Tibial artery (tissue), 4 donors: ENCODE measurements at regions of chr4 and their contacts with region 1.

Region 1: GRCh38 chr4:87390891-87391575 is at the start of gene HSD17B11:
- DNase-seq: peak; percentile 95
- H3K4me3 ChIP-seq: peak within 1 kb of the TSS; percentile 74 to 79
- H3K27ac ChIP-seq: peak within 1 kb of the TSS; percentile 92 to 95
- H3K4me1 ChIP-seq: peaks cover 0 to 20% (median 12%) of the 10 kb centered on the region in 4 donors
- H3K27me3 ChIP-seq: no peaks in the 10 kb centered on the region
- CTCF ChIP-seq: peak in 1 of 2 experiments; percentile 27

Region 2: GRCh38 chr4:87422104-87423052 is 31.3 kb after region 1 on chr4 and contains the start of gene NUDT9:
- intact Hi-C with region 1: loop called (anchors 2 kb)
- DNase-seq: peak; percentile 98
- H3K4me3 ChIP-seq: peak within 1 kb of the TSS; percentile 60 to 71
- H3K27ac ChIP-seq: peak within 1 kb of the TSS; percentile 86 to 92
- H3K4me1 ChIP-seq: peaks cover 0 to 26% (median 16%) of the 10 kb centered on the region in 4 donors
- H3K27me3 ChIP-seq: no peaks in the 10 kb centered on the region
- CTCF ChIP-seq: no peak

Region 3: GRCh38 chr4:88166608-88167007 is 775.6 kb after region 1 on chr4:
- intact Hi-C with region 1: no loop called
- DNase-seq: no peak
- H3K4me3 ChIP-seq: no peak overlapping the region
- H3K27ac ChIP-seq: no peak overlapping the region
- H3K4me1 ChIP-seq: no peaks in the 10 kb centered on the region
- H3K27me3 ChIP-seq: no peaks in the 10 kb centered on the region
- CTCF ChIP-seq: no peak

Region 4: GRCh38 chr4:88938135-88938534 is 1547.1 kb after region 1 on chr4:
- intact Hi-C with region 1: no loop called
- DNase-seq: no peak
- H3K4me3 ChIP-seq: no peak overlapping the region
- H3K27ac ChIP-seq: no peak overlapping the region
- H3K4me1 ChIP-seq: no peaks in the 10 kb centered on the region
- H3K27me3 ChIP-seq: no peaks in the 10 kb centered on the region
- CTCF ChIP-seq: no peak